GM10248 (cell line): ENCODE measurements at regions of chr3 and their contacts with region 1.

Region 1: GRCh38 chr3:182713743-182714517 is 79.4 kb upstream of the ATP11B start:
- DNase-seq: peak; percentile 45
- CTCF ChIP-seq: peak; percentile 83

Region 2: GRCh38 chr3:182703233-182703632 is 10.7 kb before region 1 on chr3:
- CTCF ChIA-PET with region 1: interaction called, 19 read pairs
- POLR2A ChIA-PET with region 1: no interaction called
- DNase-seq: no peak
- CTCF ChIP-seq: no peak

Region 3: GRCh38 chr3:182729903-182730674 is 16.2 kb after region 1 on chr3:
- CTCF ChIA-PET with region 1: interaction called, 57 read pairs
- POLR2A ChIA-PET with region 1: no interaction called
- DNase-seq: peak; percentile 63
- CTCF ChIP-seq: no peak

Region 4: DNA sequence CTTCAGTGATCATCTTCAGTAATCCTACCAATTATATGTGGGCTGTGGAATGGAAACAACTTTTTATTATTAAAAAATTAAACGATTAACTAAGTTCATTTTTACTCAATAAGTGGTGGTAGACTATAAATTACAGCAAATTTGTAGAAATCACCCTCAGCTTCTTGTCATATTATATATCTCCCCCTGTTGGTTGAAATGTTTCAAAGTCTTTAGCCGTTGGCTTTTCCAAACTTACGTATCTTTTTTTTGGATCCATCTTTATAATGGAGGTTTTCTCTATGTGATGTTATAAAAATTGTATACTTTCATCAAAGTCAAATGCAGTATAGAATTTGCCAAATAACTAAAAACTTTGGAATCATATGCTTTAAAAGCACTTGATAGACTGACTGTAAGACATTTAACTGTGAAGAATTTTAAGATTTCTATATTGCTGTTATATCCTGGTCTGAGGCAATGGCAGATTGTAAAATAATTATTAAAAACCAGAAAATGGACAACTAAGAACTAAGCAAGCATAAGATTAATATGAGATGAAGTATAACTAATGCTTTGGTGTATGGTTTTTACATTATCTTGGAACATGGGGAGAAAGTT is 124.0 kb after region 1 on chr3:
- CTCF ChIA-PET with region 1: interaction called, 14 read pairs
- POLR2A ChIA-PET with region 1: no interaction called
- DNase-seq: no peak
- CTCF ChIP-seq: peak; percentile 26